ENCODE measurements at regions of chr11 and their contacts with region 1.

Region 1: GRCh38 chr11:117817368-117818040 is 7.0 kb downstream of the FXYD2 start:
- DNase-seq: peak; percentile 95
- ATAC-seq: peak; percentile 45
- H3K4me3 Mint-ChIP-seq: peak overlapping the region; percentile 49
- H3K27ac Mint-ChIP-seq: peak overlapping the region; percentile 99
- H3K4me1 Mint-ChIP-seq: peaks cover 59% of the 10 kb centered on the region
- H3K27me3 Mint-ChIP-seq: no peaks in the 10 kb centered on the region

Region 2: DNA sequence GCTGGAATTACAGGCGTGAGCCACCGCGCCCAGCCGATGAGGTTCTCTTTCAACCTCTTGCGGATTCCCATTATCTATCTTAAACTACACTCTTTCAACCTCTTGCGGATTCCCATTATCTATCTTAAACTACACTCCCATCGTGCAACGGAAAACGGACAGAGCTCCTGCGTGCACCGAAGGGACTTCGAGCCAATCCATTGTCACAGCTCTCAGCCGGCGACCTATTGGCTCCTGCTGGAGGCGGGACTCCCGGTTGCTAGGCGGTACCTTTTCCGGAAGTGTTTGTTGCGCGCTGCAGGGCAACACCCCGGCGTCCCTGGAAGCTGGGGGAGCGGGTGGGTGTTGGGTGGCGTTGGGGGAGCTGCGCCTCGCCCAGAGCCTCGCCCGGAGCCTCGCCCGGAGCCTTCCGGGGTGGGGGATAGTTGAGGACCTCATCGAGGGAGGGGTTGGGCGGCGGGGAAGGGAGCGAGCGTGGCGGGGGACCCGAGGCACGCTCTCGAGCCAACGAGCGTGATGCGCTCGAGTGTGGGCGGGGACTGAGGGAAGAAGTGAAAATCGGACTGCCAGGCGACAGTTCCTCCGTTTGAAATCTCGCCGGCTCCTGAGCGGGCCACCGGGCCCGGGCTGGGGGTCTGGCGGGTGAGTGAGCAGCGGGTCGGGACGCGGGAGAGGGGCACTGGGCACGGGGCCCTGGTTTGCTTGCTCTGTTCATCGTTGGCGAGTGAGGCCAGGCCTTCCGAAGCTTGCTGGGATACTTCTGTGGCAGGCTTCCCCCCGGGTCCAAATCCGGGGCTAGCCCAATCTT is 489.7 kb before region 1 on chr11 and contains the start of gene CEP164:
- CTCF ChIA-PET with region 1: no interaction called
- POLR2A ChIA-PET with region 1: no interaction called
- intact Hi-C with region 1: loop called in 1 of 2 experiments (anchors 1 kb)
- DNase-seq: peak; percentile 96
- ATAC-seq: peak; percentile 97
- H3K4me3 Mint-ChIP-seq: no peak within 1 kb of the TSS
- H3K27ac Mint-ChIP-seq: peak within 1 kb of the TSS; percentile 73
- H3K4me1 Mint-ChIP-seq: peaks cover 13% of the 10 kb centered on the region
- H3K27me3 Mint-ChIP-seq: no peaks in the 10 kb centered on the region
- total RNA-seq, gene CEP164: 30.3 to 31.0 TPM

Region 3: GRCh38 chr11:117570701-117571100 is 246.8 kb before region 1 on chr11:
- CTCF ChIA-PET with region 1: no interaction called
- POLR2A ChIA-PET with region 1: no interaction called
- intact Hi-C with region 1: no loop called
- DNase-seq: no peak
- ATAC-seq: no peak
- H3K4me3 Mint-ChIP-seq: no peak overlapping the region
- H3K27ac Mint-ChIP-seq: no peak overlapping the region
- H3K4me1 Mint-ChIP-seq: no peaks in the 10 kb centered on the region
- H3K27me3 Mint-ChIP-seq: peaks cover 5% of the 10 kb centered on the region

Region 4: DNA sequence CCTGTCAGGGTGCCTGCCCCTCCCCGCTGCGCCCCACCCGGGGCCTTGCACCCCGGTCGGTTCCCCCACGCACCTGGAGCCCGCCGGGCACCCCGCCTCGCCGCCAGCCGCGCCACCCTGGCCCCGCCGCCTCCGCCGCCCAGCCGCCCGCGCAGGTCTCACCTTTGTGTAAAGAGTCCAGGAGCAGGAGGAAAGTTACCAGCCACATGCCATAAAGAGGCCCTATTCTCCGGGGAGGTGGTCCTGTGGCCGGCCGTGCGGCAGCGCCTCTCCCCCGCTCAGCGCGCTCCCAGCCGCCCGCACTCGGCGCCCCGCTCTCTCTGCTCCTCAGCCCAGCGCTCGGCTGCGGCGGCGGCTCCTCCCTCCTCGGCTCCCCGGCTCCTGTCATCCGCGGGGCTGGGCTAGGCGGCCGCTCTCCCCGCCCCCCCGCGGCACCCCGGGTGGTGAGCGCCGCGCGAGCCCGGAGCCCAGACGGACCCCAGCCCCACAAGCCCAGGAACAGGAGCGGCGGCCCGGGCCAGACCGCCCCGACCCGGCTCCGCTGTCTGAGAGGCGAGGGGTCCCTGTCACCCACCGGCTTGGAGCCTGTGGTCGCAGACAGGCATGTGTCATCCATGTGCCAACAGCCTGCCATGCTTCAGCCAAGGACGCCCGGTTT is 20.5 kb before region 1 on chr11 and contains the start of gene DSCAML1:
- CTCF ChIA-PET with region 1: interaction called, 13 read pairs
- POLR2A ChIA-PET with region 1: interaction called, 5 read pairs
- intact Hi-C with region 1: no loop called
- DNase-seq: peak; percentile 66
- ATAC-seq: peak; percentile 86
- H3K4me3 Mint-ChIP-seq: peak within 1 kb of the TSS; percentile 26
- H3K27ac Mint-ChIP-seq: no peak within 1 kb of the TSS
- H3K4me1 Mint-ChIP-seq: peaks cover 17% of the 10 kb centered on the region
- H3K27me3 Mint-ChIP-seq: peaks cover 44% of the 10 kb centered on the region
- total RNA-seq, gene DSCAML1: 0.05 to 0.67 TPM

Region 5: DNA sequence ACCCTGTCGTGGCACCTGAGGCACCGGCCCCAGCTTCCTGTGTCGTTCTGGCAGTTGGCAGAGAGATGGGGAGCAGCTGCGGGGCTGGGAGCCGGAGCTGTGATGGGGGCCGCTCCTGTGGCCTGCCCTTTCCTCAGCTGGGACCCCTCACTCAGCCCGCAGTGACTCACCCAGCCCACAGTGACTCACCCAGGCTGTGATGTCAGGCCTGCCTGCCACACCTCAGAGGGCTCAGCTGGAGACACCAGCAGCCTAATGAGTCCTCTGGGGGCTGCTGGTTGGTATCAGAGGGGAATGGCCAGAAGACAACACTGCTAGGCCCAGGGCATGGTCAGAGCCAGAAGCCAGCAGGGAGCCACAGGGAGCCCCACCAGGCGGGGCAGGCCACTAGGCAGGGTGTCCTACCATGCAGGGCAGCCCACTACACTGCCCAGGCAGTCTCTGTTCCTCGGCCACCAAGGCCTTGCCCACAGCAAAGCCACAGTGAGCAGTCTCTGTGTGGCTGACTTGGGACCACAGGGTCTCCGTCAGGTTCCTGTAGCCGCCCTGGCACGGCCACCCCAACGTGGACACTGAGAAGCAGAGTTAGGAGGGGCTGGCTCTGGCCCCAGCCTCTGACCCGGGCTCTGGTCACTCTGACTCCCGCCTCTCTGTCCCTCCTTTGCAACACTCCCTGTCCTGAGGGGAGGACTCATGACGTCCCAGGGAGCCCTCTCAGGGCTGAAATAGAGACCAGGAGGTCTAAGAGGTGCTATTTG is 11.3 kb after region 1 on chr11:
- CTCF ChIA-PET with region 1: interaction called, 29 read pairs
- POLR2A ChIA-PET with region 1: interaction called, 7 read pairs
- intact Hi-C with region 1: loop called in 1 of 2 experiments (anchors 1 kb)
- DNase-seq: peak; percentile 91
- ATAC-seq: peak; percentile 96
- H3K4me3 Mint-ChIP-seq: no peak overlapping the region
- H3K27ac Mint-ChIP-seq: peak overlapping the region; percentile 78
- H3K4me1 Mint-ChIP-seq: peaks cover 41% of the 10 kb centered on the region
- H3K27me3 Mint-ChIP-seq: no peaks in the 10 kb centered on the region

Region 6: GRCh38 chr11:117870103-117870952 is 52.8 kb after region 1 on chr11:
- CTCF ChIA-PET with region 1: no interaction called
- POLR2A ChIA-PET with region 1: no interaction called
- intact Hi-C with region 1: no loop called
- DNase-seq: no peak
- ATAC-seq: no peak
- H3K4me3 Mint-ChIP-seq: no peak overlapping the region
- H3K27ac Mint-ChIP-seq: no peak overlapping the region
- H3K4me1 Mint-ChIP-seq: peaks cover 21% of the 10 kb centered on the region
- H3K27me3 Mint-ChIP-seq: peaks cover 17% of the 10 kb centered on the region

Region 7: GRCh38 chr11:118002541-118003423 is 185.3 kb after region 1 on chr11:
- CTCF ChIA-PET with region 1: interaction called, 5 read pairs
- POLR2A ChIA-PET with region 1: interaction called, 4 read pairs
- intact Hi-C with region 1: loop called (anchors 1 to 5 kb)
- DNase-seq: peak; percentile 85
- ATAC-seq: peak; percentile 67
- H3K4me3 Mint-ChIP-seq: peak overlapping the region; percentile 38
- H3K27ac Mint-ChIP-seq: peak overlapping the region; percentile 97
- H3K4me1 Mint-ChIP-seq: peaks cover 94% of the 10 kb centered on the region
- H3K27me3 Mint-ChIP-seq: no peaks in the 10 kb centered on the region

Region 8: DNA sequence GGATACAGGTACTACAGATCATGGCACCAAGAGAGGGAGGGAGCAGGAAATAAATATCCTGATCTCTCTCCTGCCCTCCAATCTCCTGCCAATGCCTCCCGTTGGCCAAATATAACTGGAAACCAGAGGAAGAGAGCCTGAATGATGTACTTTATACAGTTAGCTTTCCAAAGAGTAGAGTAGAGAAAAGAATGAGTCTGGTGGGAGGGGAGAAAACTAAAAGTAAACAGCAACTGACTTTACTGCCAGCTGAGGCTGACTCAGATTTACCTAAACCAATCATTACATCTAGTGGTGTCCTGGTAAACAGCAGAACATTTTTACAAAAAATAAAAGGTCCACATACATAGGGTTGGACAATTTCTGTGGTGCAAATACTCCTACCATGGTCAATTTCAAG is 429.5 kb after region 1 on chr11:
- CTCF ChIA-PET with region 1: no interaction called
- POLR2A ChIA-PET with region 1: no interaction called
- intact Hi-C with region 1: loop called in 1 of 2 experiments (anchors 5 kb)
- DNase-seq: no peak
- ATAC-seq: peak; percentile 69
- H3K4me3 Mint-ChIP-seq: peak overlapping the region; percentile 11
- H3K27ac Mint-ChIP-seq: peak overlapping the region; percentile 78
- H3K4me1 Mint-ChIP-seq: peaks cover 71% of the 10 kb centered on the region
- H3K27me3 Mint-ChIP-seq: no peaks in the 10 kb centered on the region